ENCODE measurements at regions of chr5 and their contacts with region 1.

Region 1: GRCh38 chr5:138035605-138036537 is 3.0 kb upstream of the FAM13B start:
- DNase-seq: peak; percentile 21 to 90 (median 61)
- ATAC-seq: peak; percentile 40
- H3K4me3 ChIP-seq: no peak overlapping the region
- H3K4me3 Mint-ChIP-seq: no peak overlapping the region
- H3K27ac ChIP-seq: no peak overlapping the region
- H3K27ac Mint-ChIP-seq: no peak overlapping the region
- H3K4me1 ChIP-seq: peaks cover 23% of the 10 kb centered on the region
- H3K4me1 Mint-ChIP-seq: peaks cover 30% of the 10 kb centered on the region
- H3K27me3 ChIP-seq: no peaks in the 10 kb centered on the region
- H3K27me3 Mint-ChIP-seq: no peaks in the 10 kb centered on the region
- CTCF ChIP-seq: peak; percentile 99

Region 2: GRCh38 chr5:137847687-137848086 is 188.2 kb before region 1 on chr5:
- CTCF ChIA-PET with region 1: no interaction called
- POLR2A ChIA-PET with region 1: no interaction called
- intact Hi-C with region 1: no loop called
- DNase-seq: no peak
- ATAC-seq: no peak
- H3K4me3 ChIP-seq: no peak overlapping the region
- H3K4me3 Mint-ChIP-seq: no peak overlapping the region
- H3K27ac ChIP-seq: no peak overlapping the region
- H3K27ac Mint-ChIP-seq: no peak overlapping the region
- H3K4me1 ChIP-seq: no peaks in the 10 kb centered on the region
- H3K4me1 Mint-ChIP-seq: peaks cover 3% of the 10 kb centered on the region
- H3K27me3 ChIP-seq: no peaks in the 10 kb centered on the region
- H3K27me3 Mint-ChIP-seq: no peaks in the 10 kb centered on the region
- CTCF ChIP-seq: no peak

Region 3: DNA sequence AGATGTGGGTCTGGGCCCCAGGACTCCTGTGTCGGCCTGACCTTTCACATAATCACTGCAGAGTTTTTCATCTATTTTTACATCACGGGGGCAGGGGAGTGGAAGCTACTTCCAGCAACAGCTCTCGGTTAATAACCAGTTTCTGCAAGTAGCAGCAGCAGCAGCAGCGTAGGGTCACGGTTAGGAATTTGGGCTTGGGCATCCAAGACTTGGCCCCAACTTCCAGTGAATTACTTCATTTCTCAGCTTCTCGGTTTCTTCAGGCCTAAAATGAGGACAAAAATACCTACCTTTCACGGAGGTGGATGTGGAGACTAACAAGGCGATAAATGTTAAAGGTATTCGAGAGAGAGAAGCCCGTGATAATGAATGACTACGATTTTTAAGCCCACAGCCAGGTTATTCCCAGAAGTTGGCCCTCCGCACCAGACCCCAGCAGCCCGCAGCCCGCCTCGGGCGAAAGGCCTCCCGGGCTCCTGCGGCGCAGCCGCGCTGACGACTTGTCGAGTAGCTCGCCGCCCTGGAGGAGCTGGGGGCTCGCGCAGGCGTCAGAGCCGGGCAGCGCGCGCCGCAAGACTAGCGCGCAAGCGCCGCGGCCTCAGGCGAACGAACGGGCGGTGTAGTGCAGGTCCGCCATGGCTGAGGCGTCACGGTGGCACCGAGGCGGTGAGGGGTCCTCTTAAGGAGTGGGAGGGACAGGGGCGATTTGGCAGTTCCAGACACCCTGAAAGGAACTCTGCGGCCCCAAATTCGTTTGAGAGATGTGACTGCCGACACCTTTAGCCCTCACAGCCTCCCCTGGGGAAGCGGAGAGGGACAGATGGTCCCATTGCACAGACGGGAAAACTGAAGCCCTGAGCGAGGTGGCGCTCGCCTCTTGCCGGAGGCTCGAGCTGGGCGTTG is 146.8 kb before region 1 on chr5 and contains the start of gene PKD2L2:
- CTCF ChIA-PET with region 1: interaction called, 3 read pairs
- POLR2A ChIA-PET with region 1: no interaction called
- intact Hi-C with region 1: loop called in 1 of 2 experiments (anchors 2 kb)
- DNase-seq: peak; percentile 62 to 92 (median 80)
- ATAC-seq: peak; percentile 97
- H3K4me3 ChIP-seq: peak within 1 kb of the TSS; percentile 66 to 88
- H3K4me3 Mint-ChIP-seq: peak within 1 kb of the TSS; percentile 89
- H3K27ac ChIP-seq: peak within 1 kb of the TSS; percentile 81 to 87
- H3K27ac Mint-ChIP-seq: peak within 1 kb of the TSS; percentile 90
- H3K4me1 ChIP-seq: peaks cover 15% of the 10 kb centered on the region
- H3K4me1 Mint-ChIP-seq: peaks cover 24% of the 10 kb centered on the region
- H3K27me3 ChIP-seq: no peaks in the 10 kb centered on the region
- H3K27me3 Mint-ChIP-seq: no peaks in the 10 kb centered on the region
- CTCF ChIP-seq: no peak
- total RNA-seq, gene PKD2L2: not detected

Region 4: DNA sequence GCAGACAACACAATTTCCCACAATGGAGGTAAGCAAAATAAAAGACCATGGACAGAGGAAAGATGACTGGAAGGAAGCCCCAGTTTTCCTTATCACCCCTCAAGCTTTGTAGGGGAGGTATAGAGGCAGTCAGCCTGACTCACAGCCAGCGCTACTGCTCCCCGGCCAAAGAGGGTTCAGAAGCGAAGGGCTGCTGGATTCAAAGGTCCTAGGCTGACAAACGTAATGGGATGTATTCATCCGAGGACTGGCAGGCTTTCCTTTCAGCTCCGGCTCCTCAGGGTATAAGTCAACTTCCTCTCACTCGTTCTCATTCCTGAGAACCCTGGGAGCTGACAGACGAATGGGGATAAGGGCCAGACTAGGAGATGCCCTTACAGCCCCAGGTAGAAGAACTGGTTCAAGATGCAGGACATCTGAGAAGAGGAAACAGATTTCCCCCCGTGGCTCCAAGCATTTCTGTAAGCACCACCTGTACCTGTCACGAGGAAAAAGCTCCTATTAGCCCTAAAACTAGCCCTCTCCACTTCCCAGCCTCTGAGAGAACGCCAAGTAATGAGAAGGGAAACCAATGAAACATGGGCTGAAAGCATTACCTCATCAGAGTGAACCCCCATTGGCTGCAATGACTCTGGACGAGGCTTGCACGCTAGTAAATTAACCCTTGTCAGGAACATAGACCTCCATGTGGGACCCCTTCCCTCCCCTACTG is 19.1 kb after region 1 on chr5:
- CTCF ChIA-PET with region 1: interaction called, 18 read pairs
- POLR2A ChIA-PET with region 1: no interaction called
- intact Hi-C with region 1: no loop called
- DNase-seq: no peak
- ATAC-seq: no peak
- H3K4me3 ChIP-seq: no peak overlapping the region
- H3K4me3 Mint-ChIP-seq: no peak overlapping the region
- H3K27ac ChIP-seq: no peak overlapping the region
- H3K27ac Mint-ChIP-seq: no peak overlapping the region
- H3K4me1 ChIP-seq: no peaks in the 10 kb centered on the region
- H3K4me1 Mint-ChIP-seq: no peaks in the 10 kb centered on the region
- H3K27me3 ChIP-seq: no peaks in the 10 kb centered on the region
- H3K27me3 Mint-ChIP-seq: peaks cover 5% of the 10 kb centered on the region
- CTCF ChIP-seq: no peak

Region 5: DNA sequence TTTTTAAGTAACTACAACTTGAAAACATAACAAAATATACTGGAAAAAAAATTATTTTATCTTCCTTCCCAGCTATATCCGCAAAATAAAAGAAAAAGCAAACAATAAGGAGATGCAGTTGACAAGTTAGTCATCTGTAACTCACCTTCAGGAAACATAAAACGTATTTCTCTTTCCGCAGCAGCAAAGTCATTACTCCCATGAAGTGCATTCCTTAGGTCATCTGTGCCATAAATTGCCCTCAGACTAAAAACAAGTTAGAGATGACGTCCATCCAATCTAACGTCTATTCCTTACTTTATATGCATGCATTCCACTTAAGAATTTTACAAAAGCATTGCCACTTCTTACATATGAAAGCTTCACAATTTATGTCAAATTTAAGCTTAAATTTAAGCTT is 92.5 kb after region 1 on chr5:
- CTCF ChIA-PET with region 1: interaction called, 6 read pairs
- POLR2A ChIA-PET with region 1: no interaction called
- intact Hi-C with region 1: loop called (anchors 1 to 2 kb)
- DNase-seq: no peak
- ATAC-seq: no peak
- H3K4me3 ChIP-seq: no peak overlapping the region
- H3K4me3 Mint-ChIP-seq: no peak overlapping the region
- H3K27ac ChIP-seq: no peak overlapping the region
- H3K27ac Mint-ChIP-seq: no peak overlapping the region
- H3K4me1 ChIP-seq: no peaks in the 10 kb centered on the region
- H3K4me1 Mint-ChIP-seq: no peaks in the 10 kb centered on the region
- H3K27me3 ChIP-seq: no peaks in the 10 kb centered on the region
- H3K27me3 Mint-ChIP-seq: peaks cover 2% of the 10 kb centered on the region
- CTCF ChIP-seq: no peak

Region 6: DNA sequence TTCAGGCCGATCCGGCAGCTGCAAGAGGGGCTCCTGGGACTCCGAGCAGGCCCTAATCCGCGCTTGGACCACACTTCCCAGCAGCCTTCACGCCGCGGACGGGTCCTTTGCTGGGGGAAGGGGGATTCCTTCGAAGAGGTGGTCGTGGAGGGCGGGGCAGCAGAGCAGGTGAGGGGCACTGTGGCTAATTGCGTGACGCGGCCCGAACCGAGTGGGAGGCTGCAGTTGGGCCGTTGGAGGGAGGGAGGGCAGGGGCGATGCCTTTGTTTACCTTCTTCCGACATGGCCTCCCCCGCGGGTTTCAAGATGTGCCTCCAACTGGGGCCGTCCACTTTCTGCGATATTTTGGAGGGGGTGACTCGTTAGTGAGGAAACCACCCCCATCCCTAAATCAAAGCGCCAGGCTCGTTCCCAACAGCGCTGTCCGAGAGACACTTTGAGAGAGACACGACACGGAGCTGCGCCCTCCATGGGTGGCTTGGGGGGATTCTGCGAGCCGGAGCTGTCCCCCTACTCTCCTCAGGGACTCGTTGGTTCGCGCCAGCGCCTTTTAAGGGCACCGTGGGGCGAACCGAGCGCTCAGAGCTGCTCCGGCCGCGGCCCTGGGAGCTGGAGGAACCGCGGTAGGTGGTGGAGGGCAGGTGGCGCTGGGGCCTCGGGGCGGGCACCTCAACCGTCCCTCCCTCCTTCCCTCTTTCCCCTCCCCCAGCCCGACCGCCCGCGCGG is 302.0 kb after region 1 on chr5 and contains the start of gene FAM53C:
- CTCF ChIA-PET with region 1: no interaction called
- POLR2A ChIA-PET with region 1: interaction called, 3 read pairs
- intact Hi-C with region 1: loop called (anchors 5 kb)
- DNase-seq: peak; percentile 88 to 98 (median 91)
- ATAC-seq: peak; percentile 84
- H3K4me3 ChIP-seq: peak within 1 kb of the TSS; percentile 69 to 85
- H3K4me3 Mint-ChIP-seq: peak within 1 kb of the TSS; percentile 93
- H3K27ac ChIP-seq: peak within 1 kb of the TSS; percentile 95 to 99
- H3K27ac Mint-ChIP-seq: peak within 1 kb of the TSS; percentile 100
- H3K4me1 ChIP-seq: peaks cover 23% of the 10 kb centered on the region
- H3K4me1 Mint-ChIP-seq: peaks cover 41% of the 10 kb centered on the region
- H3K27me3 ChIP-seq: no peaks in the 10 kb centered on the region
- H3K27me3 Mint-ChIP-seq: no peaks in the 10 kb centered on the region
- CTCF ChIP-seq: no peak
- total RNA-seq, gene FAM53C: 99.8 to 99.9 TPM

Region 7: GRCh38 chr5:138594305-138595058 is 558.6 kb after region 1 on chr5:
- CTCF ChIA-PET with region 1: no interaction called
- POLR2A ChIA-PET with region 1: no interaction called
- intact Hi-C with region 1: no loop called
- DNase-seq: no peak
- ATAC-seq: no peak
- H3K4me3 ChIP-seq: no peak overlapping the region
- H3K4me3 Mint-ChIP-seq: no peak overlapping the region
- H3K27ac ChIP-seq: no peak overlapping the region
- H3K27ac Mint-ChIP-seq: no peak overlapping the region
- H3K4me1 ChIP-seq: no peaks in the 10 kb centered on the region
- H3K4me1 Mint-ChIP-seq: no peaks in the 10 kb centered on the region
- H3K27me3 ChIP-seq: peaks cover 0 to 2% of the 10 kb centered on the region in 2 experiments
- H3K27me3 Mint-ChIP-seq: peaks cover 16% of the 10 kb centered on the region
- CTCF ChIP-seq: peak; percentile 48

Measured in CD8-positive, alpha-beta T cell (primary cell).